Endothelial cell of umbilical vein (primary cell): ENCODE measurements at regions of chrX and their contacts with region 1.

Region 1: GRCh38 chrX:40244980-40245379 is 147.2 kb upstream of the BCOR start:
- DNase-seq: peak; percentile 77
- H3K4me3 ChIP-seq: no peak overlapping the region
- H3K27ac ChIP-seq: no peak overlapping the region
- H3K4me1 ChIP-seq: peaks cover 3% of the 10 kb centered on the region
- H3K27me3 ChIP-seq: no peaks in the 10 kb centered on the region
- CTCF ChIP-seq: no peak
- POLR2A ChIP-seq: no peak

Region 2: DNA sequence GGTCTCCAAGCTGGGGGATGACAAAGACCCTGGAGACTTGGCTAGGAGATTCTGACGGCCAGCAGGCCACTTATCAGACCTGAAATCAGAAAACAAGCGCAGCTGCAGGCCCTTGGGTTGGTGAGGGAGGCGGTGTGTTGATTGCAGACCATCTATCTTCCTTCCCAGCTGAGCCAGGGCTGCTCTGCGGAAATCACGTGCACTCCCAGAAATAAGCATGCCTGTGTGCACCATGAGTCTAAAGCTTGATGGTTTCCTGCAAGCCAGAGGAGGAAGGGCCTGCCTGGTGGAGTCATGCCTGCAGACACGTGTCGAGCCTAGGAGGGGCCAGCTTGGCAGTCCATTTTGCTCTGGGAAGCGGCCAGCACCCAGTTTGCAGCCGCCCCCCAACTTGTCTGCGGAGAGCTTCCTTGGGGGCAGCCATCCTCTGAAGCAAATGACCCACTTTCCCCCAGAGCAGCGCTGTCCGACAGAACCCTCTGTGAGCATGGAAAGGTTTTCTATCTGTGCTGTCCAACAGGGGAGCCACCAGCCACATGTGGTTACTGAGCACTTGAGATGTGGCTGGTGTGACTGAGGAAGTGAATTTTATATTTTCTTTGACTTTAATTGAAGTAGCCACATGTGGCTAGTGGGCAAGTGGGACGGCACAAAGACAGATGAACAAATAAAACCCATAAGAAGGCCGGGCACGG is 28.5 kb after region 1 on chrX:
- CTCF ChIA-PET with region 1: no interaction called
- POLR2A ChIA-PET with region 1: no interaction called
- dilution Hi-C with region 1: no loop called
- intact Hi-C with region 1: loop called (anchors 2 kb)
- DNase-seq: peak; percentile 89
- H3K4me3 ChIP-seq: no peak overlapping the region
- H3K27ac ChIP-seq: no peak overlapping the region
- H3K4me1 ChIP-seq: peaks cover 7% of the 10 kb centered on the region
- H3K27me3 ChIP-seq: no peaks in the 10 kb centered on the region
- CTCF ChIP-seq: no peak
- POLR2A ChIP-seq: no peak